ENCODE measurements at regions of chr22 and their contacts with region 1.

Region 1: GRCh38 chr22:27885977-27886842 is 32.8 kb downstream of the PITPNB start:
- DNase-seq: peak; percentile 48
- CTCF ChIP-seq: peak; percentile 63

Region 2: DNA sequence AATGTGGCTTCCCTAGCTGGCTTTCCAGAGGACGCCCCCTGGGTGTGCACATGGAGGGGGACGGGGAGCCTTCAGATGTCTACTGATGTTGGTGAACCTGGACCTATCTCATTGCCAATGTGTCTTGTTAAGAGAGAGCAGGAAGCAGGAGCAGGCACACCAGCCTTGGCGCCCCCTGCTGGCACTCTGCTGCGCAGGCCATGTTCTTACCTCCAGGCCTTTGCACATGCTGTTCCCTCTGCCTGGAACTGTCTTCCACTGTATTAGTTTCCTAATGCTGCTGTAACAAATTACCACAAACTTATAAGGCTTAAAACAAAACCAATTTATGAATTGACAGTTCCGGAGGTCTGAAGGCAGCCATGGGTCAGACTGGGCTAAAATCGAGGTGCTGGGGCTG is 61.0 kb before region 1 on chr22:
- CTCF ChIA-PET with region 1: no interaction called
- POLR2A ChIA-PET with region 1: no interaction called
- DNase-seq: no peak
- CTCF ChIP-seq: peak; percentile 17

Region 3: DNA sequence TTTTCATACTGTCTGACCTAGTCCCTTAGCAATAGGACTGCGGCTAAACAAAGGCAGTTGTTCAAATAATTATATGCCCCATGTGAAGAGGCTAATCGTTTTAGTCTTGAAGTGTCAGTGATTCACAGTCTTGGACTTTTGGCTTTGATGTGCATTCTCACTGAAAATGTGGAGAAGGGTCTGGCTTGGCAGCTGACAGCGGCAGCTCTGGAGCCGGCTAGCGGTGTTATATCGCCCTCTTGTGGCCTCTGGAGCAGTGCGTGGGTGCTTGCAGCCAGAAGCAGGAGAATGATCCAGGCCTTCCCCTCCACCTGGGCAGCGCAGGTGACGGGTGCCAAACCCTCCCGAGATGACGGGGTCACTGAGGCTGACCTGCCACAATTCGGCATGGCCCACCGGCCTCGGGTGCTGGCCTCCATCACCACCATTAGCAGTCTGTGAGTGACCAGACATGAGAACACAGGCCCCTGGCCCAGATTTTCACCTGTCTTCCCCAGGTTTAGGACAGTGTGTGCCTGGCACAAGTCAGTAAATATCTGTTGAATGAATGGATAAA is 123.1 kb after region 1 on chr22:
- CTCF ChIA-PET with region 1: interaction called, 66 read pairs
- POLR2A ChIA-PET with region 1: no interaction called
- DNase-seq: peak; percentile 90
- CTCF ChIP-seq: peak; percentile 98

Measured in GM10248 (cell line).